Gastrocnemius medialis (tissue), 4 donors: ENCODE measurements at regions of chr19 and their contacts with region 1.

Region 1: DNA sequence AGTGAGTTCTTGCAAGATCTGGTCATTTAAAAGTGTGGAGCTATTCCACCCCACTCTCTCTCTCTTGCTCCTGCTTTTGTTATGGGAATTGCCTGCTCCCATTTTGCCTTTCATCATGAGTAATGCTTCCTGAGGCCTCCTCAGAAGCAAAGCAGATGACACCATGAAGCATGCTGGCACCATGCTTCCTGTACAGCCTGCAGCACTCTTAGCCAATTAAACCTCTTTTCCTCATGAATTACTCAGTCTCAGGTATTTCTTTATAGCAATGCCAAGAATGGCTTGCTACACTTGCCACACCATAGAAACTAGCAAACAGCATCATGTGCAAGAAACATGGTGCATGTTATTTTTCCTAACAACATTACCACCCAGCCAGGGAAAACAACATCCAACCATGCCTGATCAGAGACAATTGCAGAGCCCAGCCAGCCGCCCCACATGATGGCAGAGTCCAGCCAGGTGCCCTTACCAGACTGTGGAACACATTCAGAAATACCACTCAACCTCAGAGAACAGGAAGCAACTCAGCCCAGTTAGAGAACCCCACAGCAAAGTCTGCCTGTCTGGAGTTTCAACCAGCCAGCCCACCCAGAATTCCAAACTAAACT is 36.9 kb downstream of the SYDE1 start:
- DNase-seq: no peak
- ATAC-seq: no peak
- H3K4me3 ChIP-seq: no peak overlapping the region
- H3K27ac ChIP-seq: no peak overlapping the region
- H3K4me1 ChIP-seq: no peaks in the 10 kb centered on the region
- H3K27me3 ChIP-seq: peaks cover 0 to 2% (median 0%) of the 10 kb centered on the region in 3 donors
- CTCF ChIP-seq: no peak
- POLR2A ChIP-seq: no peak

Region 2: DNA sequence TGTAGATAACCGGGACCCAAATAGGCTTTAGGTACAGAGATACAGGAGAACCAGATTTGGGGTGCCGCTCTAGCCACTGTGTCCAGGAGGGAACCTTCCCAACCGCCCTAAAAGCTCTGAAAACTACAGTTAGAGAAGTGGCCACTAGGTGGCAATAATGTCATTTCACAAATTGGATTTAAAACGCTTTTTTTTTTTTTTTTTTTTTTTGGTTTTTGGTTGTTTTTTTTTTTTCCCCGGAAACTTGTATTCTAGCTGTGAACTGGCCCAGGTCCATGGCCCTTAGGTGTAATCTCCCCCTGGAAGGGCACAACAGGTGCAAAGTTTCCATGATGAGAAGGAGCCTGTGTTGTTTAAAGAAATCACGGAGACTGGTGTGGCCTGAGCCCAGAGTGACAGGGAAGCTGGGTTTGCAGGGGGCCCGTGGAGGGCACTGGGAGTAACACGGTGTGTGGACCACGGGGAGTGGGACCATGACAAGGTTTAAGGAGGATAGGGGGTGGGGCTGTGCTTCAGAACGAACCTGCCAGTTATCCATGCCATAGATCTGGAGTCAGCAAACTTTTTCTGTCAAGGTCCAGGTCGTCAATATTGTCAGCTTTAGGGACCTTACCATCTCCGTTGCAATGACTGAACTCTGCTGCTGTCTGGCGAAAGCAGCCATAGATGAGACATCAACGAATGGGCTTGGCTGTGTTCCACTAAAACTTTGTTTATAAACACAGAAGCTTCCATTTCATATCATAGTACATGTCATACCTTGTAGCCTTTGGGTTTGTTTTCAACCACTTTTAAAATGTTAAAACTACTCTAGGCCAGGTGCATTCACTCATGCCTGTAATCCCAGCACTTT is 52.0 kb before region 1 on chr19:
- in situ Hi-C with region 1: loop called in 1 of 4 experiments (anchors 10 kb)
- intact Hi-C with region 1: no loop called
- DNase-seq: no peak
- ATAC-seq: peak in 1 of 2 donors; percentile 54
- H3K4me3 ChIP-seq: peak overlapping the region in 1 of 4 donors; percentile 6
- H3K27ac ChIP-seq: no peak overlapping the region
- H3K4me1 ChIP-seq: no peaks in the 10 kb centered on the region
- H3K27me3 ChIP-seq: peaks cover 0 to 7% (median 0%) of the 10 kb centered on the region in 3 donors
- CTCF ChIP-seq: peak; percentile 34 to 80 (median 61)
- POLR2A ChIP-seq: no peak

Region 3: DNA sequence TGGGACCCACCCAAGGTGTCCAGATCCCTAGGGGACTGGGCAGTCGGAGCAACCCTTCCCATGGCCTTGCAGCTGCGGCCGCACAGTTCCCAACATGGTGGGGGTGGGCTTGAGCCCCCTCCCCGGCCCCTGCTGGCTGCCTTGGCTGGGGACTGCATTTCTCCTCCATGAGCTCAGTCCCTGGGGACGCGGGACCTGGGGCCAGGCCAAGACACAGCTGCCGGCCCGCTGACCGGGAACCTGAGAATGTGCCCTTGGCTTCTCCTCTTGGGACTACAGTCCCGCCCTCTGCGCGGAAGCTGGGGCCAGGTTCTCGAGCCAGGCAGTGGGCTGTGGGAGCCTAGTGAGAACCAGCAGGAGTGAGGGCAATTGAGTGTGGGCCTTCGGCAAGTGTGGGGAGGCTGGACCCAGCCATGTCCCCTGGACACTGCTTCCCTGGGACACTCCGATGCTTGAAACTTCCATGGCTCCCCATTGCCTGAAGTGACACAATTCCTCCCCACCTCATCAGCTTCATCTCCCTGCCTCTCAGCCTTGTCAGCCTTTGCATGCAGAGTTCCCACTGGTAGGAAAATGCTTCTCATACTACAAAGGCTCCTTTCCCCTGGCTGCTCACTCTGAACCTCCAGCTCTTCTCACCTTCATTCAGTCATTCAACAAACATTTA is 69.7 kb after region 1 on chr19:
- in situ Hi-C with region 1: no loop called
- intact Hi-C with region 1: no loop called
- DNase-seq: peak in 1 of 2 donors; percentile 71
- ATAC-seq: peak; percentile 35 to 81
- H3K4me3 ChIP-seq: no peak overlapping the region
- H3K27ac ChIP-seq: peak overlapping the region; percentile 32 to 69 (median 62)
- H3K4me1 ChIP-seq: peaks cover 5 to 12% of the 10 kb centered on the region in 2 donors
- H3K27me3 ChIP-seq: no peaks in the 10 kb centered on the region
- CTCF ChIP-seq: no peak
- POLR2A ChIP-seq: no peak